ENCODE measurements at regions of chr16 and their contacts with region 1.

Region 1: GRCh38 chr16:57600048-57600835 is 28.2 kb upstream of the ADGRG1 start:
- DNase-seq: no peak
- ATAC-seq: peak; percentile 73
- H3K4me3 ChIP-seq: no peak overlapping the region
- H3K27ac ChIP-seq: peak overlapping the region; percentile 79; the same call in 1 of the 2 replicates
- H3K4me1 ChIP-seq: peaks cover 31% of the 10 kb centered on the region
- H3K27me3 ChIP-seq: no peaks in the 10 kb centered on the region
- CTCF ChIP-seq: peak; percentile 73 to 88 (median 87)
- EP300 ChIP-seq: no peak
- POLR2A ChIP-seq: no peak
- RAD21 ChIP-seq: peak; percentile 80

Region 2: GRCh38 chr16:57349212-57350031 is 250.8 kb before region 1 on chr16:
- CTCF ChIA-PET with region 1: no interaction called
- POLR2A ChIA-PET with region 1: no interaction called
- RAD21 ChIA-PET with region 1: no interaction called
- SMC1A ChIA-PET with region 1: no interaction called
- in situ Hi-C with region 1: no loop called
- intact Hi-C with region 1: loop called (anchors 10 kb)
- DNase-seq: peak; percentile 44
- ATAC-seq: peak; percentile 97
- H3K4me3 ChIP-seq: peak overlapping the region; percentile 53; the same call in 1 of the 2 replicates
- H3K27ac ChIP-seq: no peak overlapping the region
- H3K4me1 ChIP-seq: peaks cover 27% of the 10 kb centered on the region
- H3K27me3 ChIP-seq: no peaks in the 10 kb centered on the region
- CTCF ChIP-seq: no peak
- EP300 ChIP-seq: peak in 1 of 2 experiments; percentile 66; a peak in 2 of 4 replicates
- POLR2A ChIP-seq: no peak
- RAD21 ChIP-seq: peak; percentile 19; the same call in 1 of the 2 replicates

Region 3: GRCh38 chr16:57493767-57494166 is 106.5 kb before region 1 on chr16:
- CTCF ChIA-PET with region 1: no interaction called
- POLR2A ChIA-PET with region 1: no interaction called
- RAD21 ChIA-PET with region 1: no interaction called
- SMC1A ChIA-PET with region 1: no interaction called
- in situ Hi-C with region 1: no loop called
- intact Hi-C with region 1: no loop called
- DNase-seq: no peak
- ATAC-seq: no peak
- H3K4me3 ChIP-seq: no peak overlapping the region
- H3K27ac ChIP-seq: no peak overlapping the region
- H3K4me1 ChIP-seq: no peaks in the 10 kb centered on the region
- H3K27me3 ChIP-seq: no peaks in the 10 kb centered on the region; a peak in 1 of 4 replicates
- CTCF ChIP-seq: no peak
- EP300 ChIP-seq: no peak
- POLR2A ChIP-seq: no peak
- RAD21 ChIP-seq: no peak

Region 4: DNA sequence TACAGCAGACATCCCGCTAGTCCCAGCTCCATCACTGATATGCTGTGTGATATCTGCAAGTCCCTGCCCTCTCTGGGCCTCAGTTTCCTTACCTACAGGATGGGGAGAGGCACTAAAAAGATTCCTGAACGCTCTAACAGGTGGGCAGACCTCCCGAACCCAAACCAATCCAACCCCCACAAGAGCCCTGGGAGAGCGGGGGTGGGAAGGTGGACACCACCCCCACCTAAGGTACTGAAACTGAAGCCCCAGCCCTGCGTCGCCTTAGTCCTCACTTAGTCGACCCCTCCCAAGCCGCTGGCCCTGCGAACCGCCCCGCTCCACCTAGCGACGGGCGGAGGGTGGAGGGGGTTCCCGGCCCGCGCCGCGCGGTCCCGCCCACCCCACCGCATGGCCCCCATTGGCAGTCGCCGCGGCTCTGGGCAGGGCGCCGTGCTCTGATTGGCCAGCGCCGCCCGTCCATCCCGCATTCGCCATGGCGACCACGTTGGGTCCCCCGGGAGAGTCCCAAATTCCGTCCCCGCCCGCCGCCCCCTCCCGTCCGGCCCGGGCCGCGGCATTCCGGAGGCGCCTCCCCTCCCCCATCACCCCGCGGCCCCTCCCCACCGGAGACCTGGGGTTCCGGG is 64.4 kb before region 1 on chr16:
- CTCF ChIA-PET with region 1: interaction called, 16 read pairs
- POLR2A ChIA-PET with region 1: interaction called, 4 read pairs
- RAD21 ChIA-PET with region 1: interaction called, 19 read pairs
- SMC1A ChIA-PET with region 1: interaction called, 15 read pairs
- in situ Hi-C with region 1: no loop called
- intact Hi-C with region 1: no loop called
- DNase-seq: no peak
- ATAC-seq: peak; percentile 82
- H3K4me3 ChIP-seq: peak overlapping the region; percentile 88
- H3K27ac ChIP-seq: peak overlapping the region; percentile 85
- H3K4me1 ChIP-seq: peaks cover 63% of the 10 kb centered on the region
- H3K27me3 ChIP-seq: no peaks in the 10 kb centered on the region
- CTCF ChIP-seq: 0 out of 6 replicates have a peak, but pooled peaks of 2 of the 3 experiments have one; percentile 16 to 24
- EP300 ChIP-seq: no peak
- POLR2A ChIP-seq: no peak
- RAD21 ChIP-seq: no peak

Region 5: DNA sequence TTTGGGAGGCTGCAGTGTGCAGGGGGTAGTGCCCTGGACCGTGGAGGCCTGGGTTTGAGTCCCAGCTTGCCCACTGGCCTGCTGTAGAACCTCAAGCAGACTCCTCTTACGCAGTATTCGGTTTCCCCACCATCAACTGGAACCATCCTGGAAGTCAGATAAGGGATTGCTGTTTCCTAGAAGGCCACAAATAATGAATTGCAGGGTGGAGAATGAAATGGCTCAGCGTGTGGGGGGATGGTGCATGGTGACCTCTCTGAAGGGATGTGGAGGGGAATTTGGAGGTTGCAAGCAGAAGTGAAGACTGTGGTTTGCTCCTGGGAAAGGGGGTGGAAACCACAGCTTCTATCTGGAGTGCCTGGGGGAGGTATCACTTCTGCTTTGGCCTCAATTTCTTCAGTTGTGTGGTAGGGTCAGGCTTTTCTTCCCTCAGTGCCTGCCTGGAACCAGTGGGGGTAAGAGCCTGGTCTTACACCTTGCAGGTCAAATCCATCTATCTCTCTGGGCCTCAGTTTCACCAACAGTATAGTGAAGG is 56.1 kb before region 1 on chr16:
- CTCF ChIA-PET with region 1: interaction called, 21 read pairs
- POLR2A ChIA-PET with region 1: interaction called, 8 read pairs
- RAD21 ChIA-PET with region 1: interaction called, 19 read pairs
- SMC1A ChIA-PET with region 1: interaction called, 9 read pairs
- in situ Hi-C with region 1: no loop called
- intact Hi-C with region 1: no loop called
- DNase-seq: peak; percentile 95
- ATAC-seq: peak; percentile 81
- H3K4me3 ChIP-seq: peak overlapping the region; percentile 98
- H3K27ac ChIP-seq: peak overlapping the region; percentile 94
- H3K4me1 ChIP-seq: peaks cover 43% of the 10 kb centered on the region
- H3K27me3 ChIP-seq: no peaks in the 10 kb centered on the region
- CTCF ChIP-seq: no peak
- EP300 ChIP-seq: peak; percentile 99 to 100
- POLR2A ChIP-seq: peak; percentile 82
- RAD21 ChIP-seq: peak; percentile 23

Region 6: GRCh38 chr16:57639172-57639887 is 39.1 kb after region 1 on chr16:
- CTCF ChIA-PET with region 1: interaction called, 9 read pairs
- POLR2A ChIA-PET with region 1: no interaction called
- RAD21 ChIA-PET with region 1: interaction called, 6 read pairs
- SMC1A ChIA-PET with region 1: interaction called, 5 read pairs
- in situ Hi-C with region 1: loop called (anchors 5 kb)
- intact Hi-C with region 1: no loop called
- DNase-seq: no peak
- ATAC-seq: peak; percentile 28; the same call in 1 of the 3 replicates
- H3K4me3 ChIP-seq: no peak overlapping the region
- H3K27ac ChIP-seq: no peak overlapping the region
- H3K4me1 ChIP-seq: no peaks in the 10 kb centered on the region
- H3K27me3 ChIP-seq: peaks cover 0 to 6% of the 10 kb centered on the region in 2 experiments; a peak in 3 of 4 replicates
- CTCF ChIP-seq: no peak
- EP300 ChIP-seq: no peak
- POLR2A ChIP-seq: no peak
- RAD21 ChIP-seq: no peak

Region 7: DNA sequence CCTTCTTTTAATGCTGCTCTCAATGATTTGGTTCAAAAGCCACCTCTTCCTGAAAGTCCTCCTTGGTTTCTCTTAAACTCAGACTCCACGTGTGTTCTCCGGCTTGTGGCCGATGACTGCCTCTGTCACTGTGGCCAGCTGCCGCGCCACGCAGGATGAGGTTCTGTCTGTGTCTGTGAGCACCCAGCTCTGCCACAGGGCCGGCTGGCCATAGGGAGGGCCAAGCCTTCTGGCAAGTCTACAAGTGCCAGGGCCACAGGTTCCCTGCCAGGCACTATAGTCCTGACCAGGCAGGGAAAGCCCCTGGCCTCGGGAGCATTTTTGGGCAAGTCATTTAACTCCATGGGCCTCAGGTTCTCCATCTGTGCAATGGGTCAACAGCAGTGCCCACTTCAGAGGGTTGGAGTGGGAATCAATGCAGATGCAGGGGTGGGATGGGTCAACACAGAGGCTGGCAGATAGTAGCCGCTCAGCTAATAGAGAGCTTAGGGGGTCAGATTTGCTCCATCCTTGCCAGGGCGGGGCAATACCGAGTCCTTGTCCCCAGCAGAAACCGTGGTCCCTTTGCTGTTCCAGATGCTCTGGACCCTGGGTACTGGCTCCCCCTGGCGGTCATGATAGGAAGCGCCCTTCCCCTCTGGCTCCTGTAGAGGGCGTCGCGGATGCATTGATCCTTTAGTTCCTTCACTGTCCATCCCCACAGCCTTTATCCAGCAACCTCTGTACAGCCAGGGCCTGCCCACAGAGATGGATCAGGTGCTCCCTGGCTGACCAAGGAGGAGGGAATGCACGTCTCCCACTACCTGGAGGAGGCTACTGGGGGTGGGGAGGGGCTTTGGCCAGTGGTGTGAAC is 48.6 kb after region 1 on chr16:
- CTCF ChIA-PET with region 1: interaction called, 210 read pairs
- POLR2A ChIA-PET with region 1: interaction called, 7 read pairs
- RAD21 ChIA-PET with region 1: interaction called, 88 read pairs
- SMC1A ChIA-PET with region 1: interaction called, 126 read pairs
- in situ Hi-C with region 1: loop called (anchors 5 kb)
- intact Hi-C with region 1: loop called (anchors 1 kb)
- DNase-seq: peak; percentile 52
- ATAC-seq: peak; percentile 83
- H3K4me3 ChIP-seq: no peak overlapping the region
- H3K27ac ChIP-seq: peak overlapping the region; percentile 13; the same call in 1 of the 2 replicates
- H3K4me1 ChIP-seq: peaks cover 19% of the 10 kb centered on the region
- H3K27me3 ChIP-seq: no peaks in the 10 kb centered on the region
- CTCF ChIP-seq: peak; percentile 100; a peak in 5 of 6 replicates
- EP300 ChIP-seq: no peak
- POLR2A ChIP-seq: no peak
- RAD21 ChIP-seq: peak; percentile 99

Region 8: DNA sequence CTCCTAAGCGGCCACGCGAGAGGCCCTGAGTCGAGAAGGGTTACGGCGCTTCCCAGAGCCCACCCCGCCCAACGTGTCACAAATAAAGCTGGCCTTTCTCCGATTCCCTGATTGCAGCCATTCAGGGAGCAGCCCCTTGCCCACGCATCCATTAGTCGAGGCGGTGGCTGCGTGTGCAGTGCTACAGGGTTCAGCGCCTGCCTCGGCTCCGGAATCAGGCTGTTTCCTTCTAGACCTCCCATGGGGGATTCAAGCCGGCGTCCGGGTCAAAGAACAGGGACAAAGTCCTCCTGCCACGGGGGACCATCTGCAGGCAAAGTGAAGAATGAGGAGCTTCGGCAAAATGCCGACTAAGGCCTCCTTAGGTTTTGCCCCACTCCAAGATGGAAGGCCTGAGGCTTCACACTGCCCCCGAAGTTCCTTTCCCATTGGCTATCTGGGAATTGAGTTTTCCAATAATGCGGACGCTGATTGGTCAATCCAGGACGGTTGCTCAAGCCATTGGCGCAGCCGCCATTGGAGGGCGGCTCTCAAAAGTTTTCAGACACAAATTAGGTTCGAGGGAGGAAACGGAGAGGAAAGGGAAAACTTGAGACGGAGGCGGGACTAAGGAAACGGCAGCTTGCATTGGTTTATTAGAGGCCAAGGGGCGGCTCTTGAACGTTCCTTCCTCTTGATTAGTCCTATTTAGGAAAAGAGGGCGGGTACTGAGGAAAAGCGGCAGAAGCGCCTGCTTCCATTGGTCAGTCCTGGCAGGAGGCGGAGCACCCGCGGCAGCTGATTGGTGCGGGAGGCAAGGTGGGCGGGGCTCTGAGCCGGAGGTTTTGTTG is 134.9 kb after region 1 on chr16:
- CTCF ChIA-PET with region 1: interaction called, 6 read pairs
- POLR2A ChIA-PET with region 1: no interaction called
- RAD21 ChIA-PET with region 1: interaction called, 5 read pairs
- SMC1A ChIA-PET with region 1: interaction called, 6 read pairs
- in situ Hi-C with region 1: no loop called
- intact Hi-C with region 1: loop called (anchors 5 kb)
- DNase-seq: peak; percentile 99
- ATAC-seq: peak; percentile 95
- H3K4me3 ChIP-seq: peak overlapping the region; percentile 83
- H3K27ac ChIP-seq: peak overlapping the region; percentile 96
- H3K4me1 ChIP-seq: peaks cover 10% of the 10 kb centered on the region
- H3K27me3 ChIP-seq: no peaks in the 10 kb centered on the region
- CTCF ChIP-seq: no peak
- EP300 ChIP-seq: no peak
- POLR2A ChIP-seq: peak; percentile 75
- RAD21 ChIP-seq: no peak

Measured in GM12878 (cell line).